IMR-90 (cell line): ENCODE measurements at regions of chr2 and their contacts with region 1.

Region 1: GRCh38 chr2:170996316-170996715 is 67.3 kb downstream of the GORASP2 start:
- DNase-seq: peak; percentile 53
- ATAC-seq: no peak
- H3K4me3 ChIP-seq: no peak overlapping the region
- H3K27ac ChIP-seq: no peak overlapping the region
- H3K4me1 ChIP-seq: no peaks in the 10 kb centered on the region; the same call in 1 of the 2 replicates
- H3K27me3 ChIP-seq: no peaks in the 10 kb centered on the region
- CTCF ChIP-seq: peak; percentile 17; the same call in 1 of the 2 replicates
- POLR2A ChIP-seq: no peak
- RAD21 ChIP-seq: no peak

Region 2: GRCh38 chr2:170587922-170588321 is 408.4 kb before region 1 on chr2:
- CTCF ChIA-PET with region 1: no interaction called
- POLR2A ChIA-PET with region 1: no interaction called
- dilution Hi-C with region 1: no loop called
- in situ Hi-C with region 1: no loop called
- intact Hi-C with region 1: no loop called
- DNase-seq: no peak
- ATAC-seq: no peak
- H3K4me3 ChIP-seq: no peak overlapping the region
- H3K27ac ChIP-seq: no peak overlapping the region
- H3K4me1 ChIP-seq: no peaks in the 10 kb centered on the region
- H3K27me3 ChIP-seq: no peaks in the 10 kb centered on the region
- CTCF ChIP-seq: no peak
- POLR2A ChIP-seq: no peak
- RAD21 ChIP-seq: no peak

Region 3: DNA sequence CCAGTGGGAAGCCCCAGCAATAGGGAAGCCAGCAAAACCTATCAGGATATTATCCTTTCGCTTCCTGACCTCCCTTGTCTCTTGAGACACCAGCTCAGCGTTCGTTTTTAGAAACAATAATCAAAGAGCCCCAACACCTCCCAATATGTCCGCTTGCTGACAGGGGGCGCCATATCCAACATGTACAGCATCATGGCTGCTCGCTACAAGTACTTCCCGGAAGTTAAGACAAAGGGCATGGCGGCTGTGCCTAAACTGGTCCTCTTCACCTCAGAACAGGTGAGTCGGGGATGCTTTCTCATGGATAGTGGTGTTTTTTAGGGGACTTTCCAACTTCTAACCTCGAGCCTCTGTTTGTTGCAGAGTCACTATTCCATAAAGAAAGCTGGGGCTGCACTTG is 151.0 kb before region 1 on chr2:
- CTCF ChIA-PET with region 1: no interaction called
- POLR2A ChIA-PET with region 1: no interaction called
- dilution Hi-C with region 1: no loop called
- in situ Hi-C with region 1: no loop called
- intact Hi-C with region 1: no loop called
- DNase-seq: no peak
- ATAC-seq: no peak
- H3K4me3 ChIP-seq: no peak overlapping the region
- H3K27ac ChIP-seq: no peak overlapping the region
- H3K4me1 ChIP-seq: no peaks in the 10 kb centered on the region
- H3K27me3 ChIP-seq: no peaks in the 10 kb centered on the region
- CTCF ChIP-seq: no peak
- POLR2A ChIP-seq: no peak
- RAD21 ChIP-seq: no peak

Region 4: GRCh38 chr2:171146633-171147032 is 150.3 kb after region 1 on chr2:
- CTCF ChIA-PET with region 1: no interaction called
- POLR2A ChIA-PET with region 1: no interaction called
- dilution Hi-C with region 1: no loop called
- in situ Hi-C with region 1: no loop called
- intact Hi-C with region 1: loop called (anchors 5 kb)
- DNase-seq: no peak
- ATAC-seq: no peak
- H3K4me3 ChIP-seq: no peak overlapping the region
- H3K27ac ChIP-seq: no peak overlapping the region
- H3K4me1 ChIP-seq: 0 out of 2 replicates have a peak, but pooled peaks cover 2% of the 10 kb centered on the region
- H3K27me3 ChIP-seq: no peaks in the 10 kb centered on the region
- CTCF ChIP-seq: no peak
- POLR2A ChIP-seq: no peak
- RAD21 ChIP-seq: no peak

Region 5: GRCh38 chr2:171208657-171209056 is 212.3 kb after region 1 on chr2:
- CTCF ChIA-PET with region 1: no interaction called
- POLR2A ChIA-PET with region 1: no interaction called
- dilution Hi-C with region 1: no loop called
- in situ Hi-C with region 1: no loop called
- intact Hi-C with region 1: no loop called
- DNase-seq: no peak
- ATAC-seq: no peak
- H3K4me3 ChIP-seq: no peak overlapping the region
- H3K27ac ChIP-seq: no peak overlapping the region
- H3K4me1 ChIP-seq: peaks cover 4% of the 10 kb centered on the region
- H3K27me3 ChIP-seq: no peaks in the 10 kb centered on the region
- CTCF ChIP-seq: no peak
- POLR2A ChIP-seq: no peak
- RAD21 ChIP-seq: no peak

Region 6: DNA sequence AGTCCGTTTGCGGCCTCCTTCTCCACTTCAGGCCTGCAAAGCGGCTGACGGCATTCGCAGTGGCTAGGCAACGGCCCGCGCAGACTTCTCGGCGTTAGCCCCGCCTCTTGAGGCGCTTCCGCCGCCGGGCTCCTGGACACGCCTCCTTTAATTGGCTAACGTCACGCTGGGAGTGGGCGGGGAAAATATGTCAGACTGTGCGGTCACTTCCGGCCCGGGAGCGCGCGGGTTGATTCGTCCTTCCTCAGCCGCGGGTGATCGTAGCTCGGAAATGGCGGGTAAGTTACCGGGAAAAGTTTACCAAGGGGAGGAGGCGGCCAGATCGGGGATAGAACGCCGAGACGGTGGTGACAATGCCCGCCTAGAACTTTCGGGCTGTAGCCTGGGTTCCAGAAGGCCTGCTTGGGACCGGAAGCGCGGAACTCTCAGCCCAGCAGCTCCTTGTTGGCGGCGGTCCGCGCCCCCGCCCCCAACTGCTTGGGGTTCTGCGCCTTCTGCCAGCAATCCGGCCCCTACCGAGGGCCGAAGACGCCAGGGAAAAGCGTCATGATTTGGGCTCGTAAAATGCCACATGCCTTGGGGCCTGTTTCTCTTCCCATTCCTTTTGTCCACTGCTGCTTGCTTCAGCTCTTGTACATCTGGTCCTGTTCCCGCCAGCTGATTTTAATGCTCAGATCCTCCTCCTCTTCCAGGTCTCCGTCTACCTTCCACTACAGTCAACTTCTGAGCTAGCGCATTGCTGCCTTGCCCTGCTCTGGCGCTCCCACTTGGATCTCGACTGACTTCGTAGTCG is 926.1 kb after region 1 on chr2 and contains the start of gene HAT1:
- CTCF ChIA-PET with region 1: no interaction called
- POLR2A ChIA-PET with region 1: no interaction called
- dilution Hi-C with region 1: no loop called
- in situ Hi-C with region 1: no loop called
- intact Hi-C with region 1: no loop called
- DNase-seq: peak; percentile 98
- ATAC-seq: peak; percentile 98
- H3K4me3 ChIP-seq: peak within 1 kb of the TSS; percentile 71
- H3K27ac ChIP-seq: peak within 1 kb of the TSS; percentile 65
- H3K4me1 ChIP-seq: no peaks in the 10 kb centered on the region
- H3K27me3 ChIP-seq: no peaks in the 10 kb centered on the region
- CTCF ChIP-seq: no peak
- POLR2A ChIP-seq: peak; percentile 74
- RAD21 ChIP-seq: no peak
- total RNA-seq, gene HAT1: 24.4 and 49.2 TPM in 2 replicates